ENCODE measurements at regions of chr6 and their contacts with region 1.

Region 1: GRCh38 chr6:122869437-122870024 is 80.5 kb downstream of the SMPDL3A start:
- DNase-seq: peak in 1 of 3 donors; percentile 18
- ATAC-seq: peak; percentile 51 to 66
- H3K4me3 ChIP-seq: no peak overlapping the region
- H3K27ac ChIP-seq: no peak overlapping the region
- H3K4me1 ChIP-seq: no peaks in the 10 kb centered on the region
- H3K27me3 ChIP-seq: no peaks in the 10 kb centered on the region

Region 2: GRCh38 chr6:123316733-123317323 is 447.3 kb after region 1 on chr6:
- intact Hi-C with region 1: loop called in 1 of 4 experiments (anchors 10 kb)
- DNase-seq: no peak
- ATAC-seq: no peak
- H3K4me3 ChIP-seq: no peak overlapping the region
- H3K27ac ChIP-seq: no peak overlapping the region
- H3K4me1 ChIP-seq: no peaks in the 10 kb centered on the region
- H3K27me3 ChIP-seq: no peaks in the 10 kb centered on the region

Measured in right cardiac atrium (tissue), 5 donors.